ENCODE measurements at regions of chr9 and their contacts with region 1.

Region 1: GRCh38 chr9:2620919-2621679 is 488 bp upstream of the VLDLR start:
- DNase-seq: peak; percentile 90
- ATAC-seq: peak; percentile 82

Region 2: DNA sequence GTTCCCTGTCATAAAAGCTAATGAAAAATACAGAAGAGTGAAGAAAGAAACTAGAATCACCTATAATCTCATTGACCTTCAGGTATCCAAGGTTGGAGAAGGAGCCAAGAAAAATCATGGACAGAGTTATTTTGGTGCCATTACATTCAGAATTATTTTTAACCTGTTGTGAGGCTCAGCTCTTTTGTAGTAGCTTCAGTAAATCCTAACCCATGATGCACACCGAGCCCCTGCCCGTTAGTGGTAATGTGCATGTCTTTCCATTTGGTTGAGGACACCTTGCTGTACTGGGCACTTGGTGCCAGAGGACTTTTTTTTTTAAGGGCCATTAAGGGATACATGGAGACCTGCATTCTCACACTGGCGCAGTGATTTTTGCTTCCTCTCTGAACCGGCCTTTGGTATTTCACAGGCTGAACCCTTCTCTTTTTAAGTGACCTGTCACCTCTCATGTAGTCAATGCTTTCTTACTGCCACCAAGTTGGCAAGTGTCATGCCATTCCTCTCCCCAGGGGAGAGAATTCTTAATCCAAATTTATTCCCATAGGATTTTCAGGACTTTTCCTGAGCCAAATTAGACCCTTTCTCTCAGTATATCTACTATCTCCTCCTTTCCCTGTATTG is 480.4 kb before region 1 on chr9:
- intact Hi-C with region 1: loop called (anchors 5 kb)
- DNase-seq: no peak
- ATAC-seq: peak; percentile 71

Region 3: GRCh38 chr9:2559212-2560152 is 61.6 kb before region 1 on chr9:
- intact Hi-C with region 1: loop called (anchors 10 kb)
- DNase-seq: peak; percentile 88
- ATAC-seq: peak; percentile 98